ENCODE measurements at regions of chr16 and their contacts with region 1.

Region 1: GRCh38 chr16:73864868-73865267 is 431.7 kb upstream of the PSMD7 start:
- DNase-seq: no peak
- ATAC-seq: no peak
- H3K4me3 Mint-ChIP-seq: no peak overlapping the region
- H3K27ac Mint-ChIP-seq: no peak overlapping the region
- H3K4me1 Mint-ChIP-seq: no peaks in the 10 kb centered on the region
- H3K27me3 Mint-ChIP-seq: no peaks in the 10 kb centered on the region
- CTCF ChIP-seq: no peak

Region 2: GRCh38 chr16:73711406-73712080 is 153.3 kb before region 1 on chr16:
- CTCF ChIA-PET with region 1: no interaction called
- POLR2A ChIA-PET with region 1: no interaction called
- intact Hi-C with region 1: no loop called
- DNase-seq: no peak
- ATAC-seq: no peak
- H3K4me3 Mint-ChIP-seq: no peak overlapping the region
- H3K27ac Mint-ChIP-seq: no peak overlapping the region
- H3K4me1 Mint-ChIP-seq: no peaks in the 10 kb centered on the region
- H3K27me3 Mint-ChIP-seq: no peaks in the 10 kb centered on the region
- CTCF ChIP-seq: no peak

Region 3: DNA sequence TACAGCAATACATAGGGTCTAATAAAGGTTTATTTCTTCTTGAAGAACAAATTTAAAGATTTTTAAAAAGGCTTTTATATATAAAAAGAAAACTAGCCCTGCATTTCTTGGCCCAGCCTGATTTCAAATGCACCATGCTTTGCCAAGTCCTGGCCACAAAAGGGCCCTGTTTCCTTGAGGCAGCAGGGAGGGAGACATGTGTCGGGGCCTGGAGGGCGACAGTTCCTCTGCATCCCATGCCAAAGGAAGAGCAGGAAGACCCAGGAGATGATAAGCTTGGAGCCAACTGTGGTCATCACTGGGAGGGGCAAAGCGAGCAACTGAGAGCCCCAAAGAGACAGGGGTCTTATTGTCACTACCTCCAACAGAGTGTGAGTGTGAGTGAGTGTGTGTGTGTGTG is 139.7 kb before region 1 on chr16:
- CTCF ChIA-PET with region 1: no interaction called
- POLR2A ChIA-PET with region 1: no interaction called
- intact Hi-C with region 1: loop called (anchors 10 kb)
- DNase-seq: no peak
- ATAC-seq: no peak
- H3K4me3 Mint-ChIP-seq: no peak overlapping the region
- H3K27ac Mint-ChIP-seq: no peak overlapping the region
- H3K4me1 Mint-ChIP-seq: no peaks in the 10 kb centered on the region
- H3K27me3 Mint-ChIP-seq: no peaks in the 10 kb centered on the region
- CTCF ChIP-seq: no peak